A673 (cell line): ENCODE measurements at regions of chr1 and their contacts with region 1.

Region 1: GRCh38 chr1:176829261-176829660 is 335.3 kb downstream of the ASTN1 start:
- DNase-seq: no peak
- H3K4me3 ChIP-seq: no peak overlapping the region
- H3K27ac ChIP-seq: no peak overlapping the region
- H3K4me1 ChIP-seq: no peaks in the 10 kb centered on the region
- H3K27me3 ChIP-seq: no peaks in the 10 kb centered on the region
- CTCF ChIP-seq: no peak

Region 2: DNA sequence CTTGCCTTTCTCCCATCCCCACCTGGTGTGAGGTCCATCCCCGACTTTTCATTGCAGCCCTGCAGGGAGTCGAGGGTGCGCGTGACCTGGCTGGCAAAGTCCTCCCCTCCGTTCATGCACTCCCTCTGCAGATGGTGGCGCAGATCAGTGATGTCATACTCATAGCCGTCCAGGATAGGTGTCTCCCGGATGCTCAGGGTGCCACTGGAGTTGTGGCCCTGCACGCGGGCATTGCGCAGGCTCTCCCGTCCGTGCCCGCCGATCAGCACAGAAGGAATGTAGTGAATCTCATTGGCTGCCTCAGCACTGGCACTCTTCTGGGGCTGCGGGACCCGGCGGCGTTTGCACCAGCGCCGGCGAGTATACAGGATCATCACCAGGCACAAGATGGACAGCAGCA is 203.2 kb after region 1 on chr1:
- CTCF ChIA-PET with region 1: no interaction called
- POLR2A ChIA-PET with region 1: interaction called, 26 read pairs
- intact Hi-C with region 1: no loop called
- DNase-seq: no peak
- H3K4me3 ChIP-seq: no peak overlapping the region
- H3K27ac ChIP-seq: no peak overlapping the region
- H3K4me1 ChIP-seq: no peaks in the 10 kb centered on the region
- H3K27me3 ChIP-seq: no peaks in the 10 kb centered on the region
- CTCF ChIP-seq: no peak